ENCODE measurements at regions of chr1 and their contacts with region 1.

Region 1: DNA sequence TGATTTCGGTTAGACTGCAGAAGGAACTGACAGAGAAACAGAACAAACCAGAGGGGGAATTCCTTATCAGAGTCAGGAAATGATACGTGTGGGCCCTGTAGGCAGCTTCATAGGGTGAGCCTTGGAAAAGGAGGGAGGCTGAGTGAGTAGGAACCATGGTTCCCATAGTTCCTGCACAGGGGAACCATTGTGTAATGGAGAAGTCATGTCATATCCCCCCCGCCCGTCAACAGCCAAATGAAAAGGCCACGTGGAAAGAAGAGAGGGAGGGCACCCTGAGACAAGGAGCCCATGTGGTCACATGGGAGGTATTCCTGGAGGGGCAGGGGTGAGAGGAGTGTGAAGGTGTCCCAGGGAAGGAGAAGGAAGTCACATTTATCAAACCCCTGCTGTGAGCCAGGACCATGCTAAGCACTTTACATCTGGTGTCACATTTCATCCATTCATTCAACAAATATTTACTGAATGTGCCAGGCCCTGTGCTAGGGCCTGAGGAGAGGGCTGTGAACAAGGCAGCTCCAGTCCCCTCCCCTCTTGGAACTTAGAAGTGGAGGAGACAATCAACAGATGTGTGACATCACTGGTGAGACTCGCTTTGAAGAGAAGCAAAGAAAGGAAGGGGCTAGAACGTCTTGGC is 15.7 kb upstream of the FGR start:
- DNase-seq: no peak
- H3K4me3 ChIP-seq: no peak overlapping the region
- CTCF ChIP-seq: no peak

Region 2: DNA sequence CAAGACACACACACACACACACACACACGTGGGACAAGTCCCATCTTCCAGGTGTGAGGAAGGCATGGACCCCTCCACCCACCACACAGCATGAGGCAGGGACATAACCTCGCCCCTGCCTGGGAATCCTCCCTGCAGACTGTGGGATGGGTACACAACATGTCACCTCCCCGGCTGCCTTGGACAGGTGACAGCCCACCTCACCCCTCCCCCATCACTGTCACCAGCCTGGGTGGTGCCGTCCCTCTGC is 87.4 kb before region 1 on chr1:
- CTCF ChIA-PET with region 1: no interaction called
- POLR2A ChIA-PET with region 1: no interaction called
- DNase-seq: no peak
- H3K4me3 ChIP-seq: no peak overlapping the region
- CTCF ChIP-seq: no peak

Region 3: GRCh38 chr1:27638047-27638734 is 12.5 kb before region 1 on chr1:
- CTCF ChIA-PET with region 1: interaction called, 12 read pairs
- POLR2A ChIA-PET with region 1: no interaction called
- DNase-seq: no peak
- H3K4me3 ChIP-seq: no peak overlapping the region
- CTCF ChIP-seq: no peak